Activated CD4-positive, alpha-beta memory T cell treated with anti-CD3 and anti-CD28 coated beads for 36 hours (primary cell): ENCODE measurements at regions of chr1 and their contacts with region 1.

Region 1: GRCh38 chr1:18299441-18300338 is 181.0 kb upstream of the KLHDC7A start:
- DNase-seq: peak; percentile 15
- H3K4me3 Mint-ChIP-seq: no peak overlapping the region
- H3K27ac Mint-ChIP-seq: no peak overlapping the region
- H3K4me1 Mint-ChIP-seq: no peaks in the 10 kb centered on the region
- H3K27me3 Mint-ChIP-seq: peaks cover 34% of the 10 kb centered on the region

Region 2: GRCh38 chr1:18232052-18232451 is 67.6 kb before region 1 on chr1:
- CTCF ChIA-PET with region 1: no interaction called
- POLR2A ChIA-PET with region 1: no interaction called
- intact Hi-C with region 1: no loop called
- DNase-seq: no peak
- H3K4me3 Mint-ChIP-seq: no peak overlapping the region
- H3K27ac Mint-ChIP-seq: no peak overlapping the region
- H3K4me1 Mint-ChIP-seq: no peaks in the 10 kb centered on the region
- H3K27me3 Mint-ChIP-seq: peaks cover 22% of the 10 kb centered on the region

Region 3: DNA sequence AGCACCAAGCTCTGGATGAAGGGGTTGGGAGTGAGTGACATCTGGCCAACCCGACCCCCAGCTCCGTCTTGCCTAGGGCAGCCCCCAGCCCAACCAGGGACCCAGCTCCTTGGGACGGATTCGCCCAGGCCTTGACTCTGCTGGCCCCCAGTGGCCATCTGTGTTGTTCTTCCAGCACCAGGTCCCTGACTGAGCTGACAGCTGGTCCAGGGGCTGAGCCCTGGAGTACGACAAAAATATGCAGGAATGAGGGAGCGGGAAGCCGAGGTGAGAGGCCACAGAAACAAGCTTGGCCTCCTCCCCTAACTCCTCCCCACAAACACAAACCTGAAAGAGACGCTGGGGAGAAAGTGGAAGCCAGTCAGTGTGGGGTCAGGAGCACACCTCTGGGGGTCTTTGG is 275.9 kb after region 1 on chr1:
- CTCF ChIA-PET with region 1: interaction called, 16 read pairs
- POLR2A ChIA-PET with region 1: no interaction called
- intact Hi-C with region 1: no loop called
- DNase-seq: peak; percentile 60
- H3K4me3 Mint-ChIP-seq: no peak overlapping the region
- H3K27ac Mint-ChIP-seq: no peak overlapping the region
- H3K4me1 Mint-ChIP-seq: no peaks in the 10 kb centered on the region
- H3K27me3 Mint-ChIP-seq: peaks cover 5% of the 10 kb centered on the region

Region 4: DNA sequence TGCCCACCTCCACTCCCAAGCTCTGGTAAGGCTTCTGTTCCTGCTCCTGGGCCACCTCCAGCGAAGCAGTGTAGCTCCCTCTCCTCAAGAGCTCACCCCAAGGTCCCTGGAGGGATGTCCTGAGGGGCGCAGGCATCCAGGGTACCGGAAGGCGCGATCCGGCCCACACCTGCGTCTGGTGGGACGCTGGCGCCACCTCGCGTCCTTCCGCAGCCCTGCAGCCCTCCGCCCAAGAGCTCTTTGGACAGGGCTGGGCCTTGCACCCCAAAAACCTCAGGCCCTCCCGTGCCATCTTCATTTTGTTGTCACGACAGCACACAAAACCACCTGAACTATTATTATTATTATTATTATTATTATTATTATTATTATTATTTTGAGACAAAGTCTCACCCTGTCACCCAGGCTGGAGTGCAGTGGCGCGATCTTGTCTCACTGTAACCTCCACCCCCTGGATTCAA is 281.8 kb after region 1 on chr1:
- CTCF ChIA-PET with region 1: interaction called, 16 read pairs
- POLR2A ChIA-PET with region 1: no interaction called
- intact Hi-C with region 1: no loop called
- DNase-seq: peak; percentile 58
- H3K4me3 Mint-ChIP-seq: no peak overlapping the region
- H3K27ac Mint-ChIP-seq: no peak overlapping the region
- H3K4me1 Mint-ChIP-seq: no peaks in the 10 kb centered on the region
- H3K27me3 Mint-ChIP-seq: peaks cover 12% of the 10 kb centered on the region